Sigmoid colon (tissue), 7 donors: ENCODE measurements at regions of chr4 and their contacts with region 1.

Region 1: DNA sequence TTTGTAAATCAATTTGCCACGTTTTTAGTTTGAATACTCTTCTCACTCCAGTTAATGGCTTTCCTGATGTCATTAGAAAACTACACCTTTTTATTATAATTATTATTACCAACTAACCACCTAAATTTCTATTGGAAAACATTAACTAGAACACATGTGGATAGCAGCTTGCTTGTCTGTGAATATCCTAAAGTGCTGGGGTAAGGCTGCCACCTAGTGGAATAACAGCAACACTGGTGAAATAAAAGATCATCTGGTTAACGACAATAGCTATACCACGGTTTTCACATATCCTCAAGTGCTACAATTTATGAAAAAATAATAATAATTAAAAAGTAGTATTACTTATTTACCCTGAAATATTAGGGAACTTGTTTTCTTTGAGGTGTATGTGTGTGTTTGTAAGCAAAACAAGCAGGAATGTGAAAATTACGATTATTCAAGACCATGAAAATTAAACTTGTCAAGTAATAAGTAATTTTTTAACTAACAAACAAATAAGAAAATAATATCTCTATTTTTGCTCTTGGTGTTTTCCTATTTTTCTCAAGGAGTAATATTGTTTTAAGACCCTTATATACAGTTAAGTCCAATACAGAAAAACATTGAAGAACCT is 130.1 kb upstream of the TECRL start:
- DNase-seq: no peak
- H3K4me3 ChIP-seq: no peak overlapping the region
- H3K27ac ChIP-seq: no peak overlapping the region
- H3K4me1 ChIP-seq: no peaks in the 10 kb centered on the region
- H3K27me3 ChIP-seq: no peaks in the 10 kb centered on the region
- CTCF ChIP-seq: peak; percentile 30 to 75 (median 57)
- EP300 ChIP-seq: no peak
- POLR2A ChIP-seq: no peak

Region 2: GRCh38 chr4:64158648-64159326 is 380.6 kb before region 1 on chr4:
- intact Hi-C with region 1: loop called (anchors 2 kb)
- DNase-seq: no peak
- H3K4me3 ChIP-seq: peak overlapping the region in 2 of 4 donors; percentile 18 to 28
- H3K27ac ChIP-seq: no peak overlapping the region
- H3K4me1 ChIP-seq: no peaks in the 10 kb centered on the region
- H3K27me3 ChIP-seq: no peaks in the 10 kb centered on the region
- CTCF ChIP-seq: peak; percentile 24 to 82 (median 58)
- EP300 ChIP-seq: no peak
- POLR2A ChIP-seq: no peak

Region 3: DNA sequence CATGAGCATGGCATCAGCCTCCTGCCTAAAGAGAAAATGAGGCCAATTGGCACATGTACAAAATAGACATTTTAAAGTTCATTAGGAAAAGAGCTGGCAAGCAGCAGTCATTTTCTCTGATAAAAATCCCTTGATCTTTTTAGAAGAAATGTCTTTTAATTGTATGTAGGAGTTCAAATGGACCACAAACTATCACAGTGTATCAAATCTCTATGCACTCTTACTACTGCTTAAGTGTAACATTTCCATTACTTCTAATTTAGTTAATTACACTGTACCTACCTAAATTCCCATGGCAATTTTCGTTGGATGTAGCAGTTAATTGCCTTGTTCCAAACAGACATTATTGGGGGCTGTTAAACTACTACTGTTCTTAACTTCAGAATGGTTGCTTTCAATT is 103.6 kb after region 1 on chr4:
- intact Hi-C with region 1: no loop called
- DNase-seq: no peak
- H3K4me3 ChIP-seq: no peak overlapping the region
- H3K27ac ChIP-seq: no peak overlapping the region
- H3K4me1 ChIP-seq: no peaks in the 10 kb centered on the region
- H3K27me3 ChIP-seq: no peaks in the 10 kb centered on the region
- CTCF ChIP-seq: no peak
- EP300 ChIP-seq: no peak
- POLR2A ChIP-seq: no peak